ENCODE measurements at regions of chr10 and their contacts with region 1.

Region 1: GRCh38 chr10:100338434-100339036 is 8.5 kb upstream of the SCD start:
- DNase-seq: peak; percentile 78
- H3K4me3 ChIP-seq: no peak overlapping the region; a peak in 1 of 4 replicates
- H3K27ac ChIP-seq: no peak overlapping the region
- H3K4me1 ChIP-seq: peaks cover 0 to 12% of the 10 kb centered on the region in 2 experiments; a peak in 1 of 4 replicates
- H3K27me3 ChIP-seq: peaks cover 14% of the 10 kb centered on the region; the same call in 1 of the 2 replicates
- CTCF ChIP-seq: peak; percentile 90
- EP300 ChIP-seq: no peak
- RAD21 ChIP-seq: peak; percentile 97

Region 2: GRCh38 chr10:100327007-100327717 is 11.4 kb before region 1 on chr10:
- CTCF ChIA-PET with region 1: interaction called, 17 read pairs
- POLR2A ChIA-PET with region 1: no interaction called
- DNase-seq: no peak
- H3K4me3 ChIP-seq: no peak overlapping the region
- H3K27ac ChIP-seq: no peak overlapping the region
- H3K4me1 ChIP-seq: no peaks in the 10 kb centered on the region
- H3K27me3 ChIP-seq: peaks cover 39% of the 10 kb centered on the region
- CTCF ChIP-seq: no peak
- EP300 ChIP-seq: no peak
- RAD21 ChIP-seq: no peak

Region 3: DNA sequence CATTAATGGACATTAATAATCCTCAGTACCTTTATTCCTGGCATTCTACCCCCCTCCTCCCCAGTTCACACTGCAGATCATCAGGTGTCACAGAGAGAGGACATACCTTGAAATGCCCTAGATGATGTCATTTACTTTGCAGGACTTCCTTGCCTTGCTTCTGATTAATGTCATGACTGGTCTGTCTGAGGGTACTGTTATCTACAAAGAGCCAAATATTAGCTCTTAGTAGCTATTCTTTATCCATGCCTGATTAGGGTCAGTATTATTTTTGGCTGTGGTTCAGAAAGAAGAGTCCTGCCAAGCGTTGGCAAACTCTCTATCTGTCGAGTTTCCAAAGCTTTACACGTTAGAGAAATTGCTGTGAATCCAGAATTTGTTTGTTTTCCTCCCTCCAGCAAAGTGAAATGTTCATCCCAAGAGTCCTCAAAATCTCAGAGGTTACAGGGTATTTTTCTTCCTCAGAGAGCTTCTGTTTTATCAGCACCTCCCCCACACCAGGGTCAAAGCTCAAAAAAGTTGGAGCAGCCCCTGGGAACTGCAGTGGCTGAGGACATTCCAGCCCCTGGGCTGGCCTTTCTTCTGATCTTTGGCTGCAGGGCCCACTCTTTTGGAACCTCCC is 21.1 kb after region 1 on chr10:
- CTCF ChIA-PET with region 1: no interaction called
- POLR2A ChIA-PET with region 1: no interaction called
- DNase-seq: peak; percentile 57
- H3K4me3 ChIP-seq: no peak overlapping the region; a peak in 1 of 4 replicates
- H3K27ac ChIP-seq: peak overlapping the region in 1 of 2 experiments; percentile 76; a peak in 2 of 4 replicates
- H3K4me1 ChIP-seq: peaks cover 15 to 56% of the 10 kb centered on the region in 2 experiments
- H3K27me3 ChIP-seq: no peaks in the 10 kb centered on the region
- CTCF ChIP-seq: no peak
- EP300 ChIP-seq: peak in 1 of 2 experiments; percentile 60; a peak in 2 of 4 replicates
- RAD21 ChIP-seq: peak; percentile 1; the same call in 1 of the 2 replicates

Measured in SK-N-SH (cell line).